Activated B cell treated with CpG ODN at 0.5 μM for 24 hours (primary cell): ENCODE measurements at regions of chr11 and their contacts with region 1.

Region 1: DNA sequence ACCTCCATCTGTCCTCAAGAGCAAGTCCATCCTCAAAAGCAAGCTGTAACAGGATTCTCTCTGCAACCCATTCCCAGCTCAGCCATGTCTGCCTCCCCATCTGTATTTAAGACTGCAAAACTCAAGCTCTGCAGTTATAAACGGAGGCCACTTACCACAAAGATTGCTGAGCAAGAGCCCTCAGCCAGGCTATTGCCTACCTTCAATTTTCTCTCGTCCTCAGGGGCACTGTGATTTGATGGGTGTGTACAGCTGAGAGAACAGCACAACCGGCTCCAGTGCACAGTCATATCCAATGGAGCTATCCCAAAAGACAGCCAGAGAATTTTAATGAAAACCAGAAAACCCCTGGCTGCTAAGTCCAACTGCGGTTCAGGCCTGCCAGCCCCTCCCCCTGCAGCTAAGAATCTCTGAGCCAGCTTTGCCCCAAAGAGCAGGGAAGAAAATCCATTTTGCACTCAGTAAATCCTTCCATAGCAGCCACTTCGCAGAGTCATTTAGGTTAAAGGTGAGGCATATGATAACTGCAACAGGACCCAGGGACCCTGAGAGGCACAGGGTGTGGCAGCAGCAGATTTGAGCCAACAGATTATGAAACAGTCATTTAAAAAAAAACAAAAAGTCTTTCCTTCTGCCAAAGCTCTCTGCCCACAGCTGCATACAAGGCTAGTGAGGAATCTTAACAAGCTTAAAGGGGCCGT is 37.6 kb downstream of the RAB30 start:
- DNase-seq: no peak
- ATAC-seq: no peak
- H3K4me3 Mint-ChIP-seq: peak overlapping the region; percentile 62
- H3K27ac Mint-ChIP-seq: peak overlapping the region; percentile 75
- H3K4me1 Mint-ChIP-seq: peaks cover 79% of the 10 kb centered on the region
- H3K27me3 Mint-ChIP-seq: no peaks in the 10 kb centered on the region
- CTCF ChIP-seq: no peak

Region 2: DNA sequence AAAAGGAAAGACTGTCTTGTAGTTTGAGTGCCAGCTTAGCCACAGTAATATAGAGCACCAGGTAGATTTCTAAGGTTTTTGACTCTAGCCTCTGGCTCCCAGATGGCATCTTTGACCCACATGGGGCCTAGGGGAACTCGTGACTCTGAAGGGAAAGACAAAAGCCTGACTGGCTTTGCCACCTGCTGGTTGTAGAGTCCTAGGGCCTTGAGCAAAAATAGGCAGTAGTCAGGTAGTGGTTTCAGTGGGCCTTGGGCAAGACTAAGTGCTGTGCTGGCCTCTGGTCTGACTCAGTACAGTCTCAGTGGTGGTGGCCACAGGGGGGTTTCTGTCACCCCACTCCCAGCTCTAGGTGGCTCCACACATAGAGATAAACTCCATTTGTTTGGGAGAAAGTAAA is 649.8 kb before region 1 on chr11:
- CTCF ChIA-PET with region 1: no interaction called
- POLR2A ChIA-PET with region 1: no interaction called
- intact Hi-C with region 1: no loop called
- DNase-seq: no peak
- ATAC-seq: no peak
- H3K4me3 Mint-ChIP-seq: no peak overlapping the region
- H3K27ac Mint-ChIP-seq: no peak overlapping the region
- H3K4me1 Mint-ChIP-seq: no peaks in the 10 kb centered on the region
- H3K27me3 Mint-ChIP-seq: no peaks in the 10 kb centered on the region
- CTCF ChIP-seq: no peak

Region 3: GRCh38 chr11:82996966-82997606 is 37.0 kb before region 1 on chr11:
- CTCF ChIA-PET with region 1: interaction called, 3 read pairs
- POLR2A ChIA-PET with region 1: interaction called, 5 read pairs
- intact Hi-C with region 1: loop called (anchors 5 kb)
- DNase-seq: no peak
- ATAC-seq: peak; percentile 88
- H3K4me3 Mint-ChIP-seq: peak overlapping the region; percentile 75
- H3K27ac Mint-ChIP-seq: peak overlapping the region; percentile 84
- H3K4me1 Mint-ChIP-seq: peaks cover 93% of the 10 kb centered on the region
- H3K27me3 Mint-ChIP-seq: no peaks in the 10 kb centered on the region
- CTCF ChIP-seq: no peak

Region 4: DNA sequence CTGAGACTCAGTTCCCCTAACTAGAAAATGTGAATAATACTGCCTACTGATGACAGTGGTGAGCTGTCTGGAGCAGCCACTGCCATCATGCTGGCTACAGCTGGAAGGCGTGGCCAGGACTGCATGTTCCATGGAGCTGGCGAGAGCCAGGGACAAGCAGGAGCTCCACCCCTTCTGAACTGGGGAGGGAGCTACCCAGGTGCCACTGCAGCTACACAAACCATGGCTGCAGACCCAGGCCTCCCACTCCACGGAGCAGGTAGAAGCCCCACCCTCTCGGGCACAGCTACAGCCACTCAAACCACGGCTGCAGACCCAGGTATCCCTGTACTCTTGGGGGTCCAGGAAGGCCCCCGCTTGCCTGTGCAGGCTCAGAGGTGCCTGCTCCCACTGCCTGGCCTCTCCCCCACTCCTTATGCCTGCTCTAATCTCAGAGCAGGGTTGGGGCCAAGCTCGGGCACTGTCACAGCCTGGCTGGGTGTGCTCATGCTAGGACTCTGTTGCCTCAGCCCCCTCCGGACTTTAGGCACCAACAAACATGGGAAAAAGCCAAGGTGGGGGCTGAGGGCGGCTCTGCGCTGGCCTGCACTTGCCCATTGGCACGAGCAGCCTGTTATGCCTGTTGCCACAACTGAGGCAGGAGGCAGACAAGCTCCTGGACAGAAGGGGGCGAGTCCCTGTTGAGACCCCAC is 14.1 kb before region 1 on chr11:
- CTCF ChIA-PET with region 1: no interaction called
- POLR2A ChIA-PET with region 1: interaction called, 4 read pairs
- intact Hi-C with region 1: loop called (anchors 1 kb)
- DNase-seq: no peak
- ATAC-seq: no peak
- H3K4me3 Mint-ChIP-seq: no peak overlapping the region
- H3K27ac Mint-ChIP-seq: no peak overlapping the region
- H3K4me1 Mint-ChIP-seq: peaks cover 78% of the 10 kb centered on the region
- H3K27me3 Mint-ChIP-seq: no peaks in the 10 kb centered on the region
- CTCF ChIP-seq: no peak

Region 5: GRCh38 chr11:83044958-83045712 is 11.0 kb after region 1 on chr11:
- CTCF ChIA-PET with region 1: no interaction called
- POLR2A ChIA-PET with region 1: interaction called, 5 read pairs
- intact Hi-C with region 1: loop called (anchors 1 kb)
- DNase-seq: no peak
- ATAC-seq: peak; percentile 64
- H3K4me3 Mint-ChIP-seq: peak overlapping the region; percentile 13
- H3K27ac Mint-ChIP-seq: peak overlapping the region; percentile 64
- H3K4me1 Mint-ChIP-seq: peaks cover 86% of the 10 kb centered on the region
- H3K27me3 Mint-ChIP-seq: no peaks in the 10 kb centered on the region
- CTCF ChIP-seq: no peak

Region 6: DNA sequence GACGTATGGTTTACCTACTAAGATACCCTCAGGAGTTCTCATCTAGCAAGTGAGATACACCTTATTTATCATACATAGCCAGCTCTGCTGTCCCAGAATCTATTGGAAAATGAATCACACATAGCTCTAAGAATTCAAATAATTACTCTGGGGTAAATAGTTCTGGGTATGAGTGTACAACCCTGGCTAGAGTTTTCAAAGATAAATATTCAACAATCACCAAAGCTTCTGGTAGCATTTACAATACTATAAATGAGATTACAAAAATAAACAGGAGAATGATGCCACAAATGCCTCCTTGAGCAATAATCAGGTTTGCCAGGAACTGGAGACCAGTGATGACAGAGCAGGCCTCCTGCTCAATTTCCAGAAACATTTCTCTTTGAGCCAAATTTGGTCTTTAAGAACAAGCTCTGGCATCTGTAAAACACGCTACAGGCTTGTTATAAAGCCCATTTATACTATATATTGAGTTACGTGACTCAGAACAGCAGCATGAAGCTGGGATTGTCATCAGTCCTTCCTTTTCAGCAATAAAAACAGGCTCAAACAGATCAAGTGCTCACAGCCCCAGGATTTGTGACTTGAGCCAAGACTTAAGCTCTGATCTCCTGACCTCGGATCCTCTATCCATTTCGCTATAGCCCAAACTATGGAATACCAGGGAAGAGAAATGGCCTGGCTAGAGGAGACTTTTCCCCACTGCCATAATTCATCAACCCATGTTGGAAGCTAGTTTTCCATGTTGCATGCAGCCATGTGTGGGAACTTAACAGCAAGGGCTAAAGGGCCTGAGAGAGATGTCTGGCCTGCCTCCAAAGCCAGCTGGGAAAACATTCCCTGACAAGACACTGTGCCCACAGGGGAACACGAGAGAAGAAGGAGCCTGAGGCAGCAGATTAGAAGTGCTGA is 17.9 kb after region 1 on chr11:
- CTCF ChIA-PET with region 1: no interaction called
- POLR2A ChIA-PET with region 1: interaction called, 5 read pairs
- intact Hi-C with region 1: loop called (anchors 2 kb)
- DNase-seq: no peak
- ATAC-seq: no peak
- H3K4me3 Mint-ChIP-seq: no peak overlapping the region
- H3K27ac Mint-ChIP-seq: peak overlapping the region; percentile 41
- H3K4me1 Mint-ChIP-seq: peaks cover 90% of the 10 kb centered on the region
- H3K27me3 Mint-ChIP-seq: no peaks in the 10 kb centered on the region
- CTCF ChIP-seq: no peak

Region 7: DNA sequence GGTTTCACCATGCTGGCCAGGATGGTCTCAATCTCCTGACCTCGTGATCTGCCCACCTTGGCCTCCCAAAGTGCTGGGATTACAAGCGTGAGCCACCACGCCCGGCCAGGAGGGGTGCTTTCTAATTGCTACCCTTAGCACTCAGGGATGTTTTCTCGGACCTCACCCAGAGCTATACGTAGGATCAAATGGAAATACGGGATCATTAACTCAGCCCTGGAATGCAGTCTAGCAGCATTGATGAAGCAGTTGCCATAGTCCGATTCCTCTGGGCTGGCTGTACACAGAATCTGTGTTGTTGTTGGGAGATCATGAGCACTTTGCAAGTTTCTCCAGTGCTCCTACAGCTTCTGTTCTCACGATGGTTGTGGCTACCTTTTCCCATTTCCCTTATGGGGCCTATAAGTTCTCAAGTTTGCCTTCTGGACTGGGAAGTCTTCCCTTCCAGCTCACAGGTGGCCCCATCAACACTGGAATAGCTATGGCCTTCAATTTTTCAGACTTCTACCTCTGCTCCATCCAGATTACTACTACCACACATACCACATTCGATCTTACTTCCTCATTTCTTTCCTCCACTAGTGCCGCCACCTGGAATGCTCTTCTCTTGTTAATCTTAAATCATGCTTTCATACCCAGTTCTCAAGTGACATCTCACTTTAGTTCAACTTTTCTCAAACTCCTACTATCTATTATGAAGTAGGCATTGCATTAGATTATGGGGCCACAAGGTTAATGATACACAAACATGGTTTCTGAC is 106.8 kb after region 1 on chr11:
- CTCF ChIA-PET with region 1: no interaction called
- POLR2A ChIA-PET with region 1: no interaction called
- intact Hi-C with region 1: no loop called
- DNase-seq: no peak
- ATAC-seq: peak; percentile 78
- H3K4me3 Mint-ChIP-seq: no peak overlapping the region
- H3K27ac Mint-ChIP-seq: no peak overlapping the region
- H3K4me1 Mint-ChIP-seq: peaks cover 8% of the 10 kb centered on the region
- H3K27me3 Mint-ChIP-seq: no peaks in the 10 kb centered on the region
- CTCF ChIP-seq: no peak

Region 8: GRCh38 chr11:83205608-83206185 is 171.6 kb after region 1 on chr11:
- CTCF ChIA-PET with region 1: no interaction called
- POLR2A ChIA-PET with region 1: no interaction called
- intact Hi-C with region 1: no loop called
- DNase-seq: no peak
- ATAC-seq: no peak
- H3K4me3 Mint-ChIP-seq: no peak overlapping the region
- H3K27ac Mint-ChIP-seq: no peak overlapping the region
- H3K4me1 Mint-ChIP-seq: no peaks in the 10 kb centered on the region
- H3K27me3 Mint-ChIP-seq: no peaks in the 10 kb centered on the region
- CTCF ChIP-seq: no peak

Region 9: GRCh38 chr11:83957038-83957900 is 923.1 kb after region 1 on chr11:
- CTCF ChIA-PET with region 1: no interaction called
- POLR2A ChIA-PET with region 1: no interaction called
- intact Hi-C with region 1: no loop called
- DNase-seq: no peak
- ATAC-seq: no peak
- H3K4me3 Mint-ChIP-seq: no peak overlapping the region
- H3K27ac Mint-ChIP-seq: no peak overlapping the region
- H3K4me1 Mint-ChIP-seq: no peaks in the 10 kb centered on the region
- H3K27me3 Mint-ChIP-seq: no peaks in the 10 kb centered on the region
- CTCF ChIP-seq: no peak